ENCODE measurements at regions of chr6 and their contacts with region 1.

Region 1: GRCh38 chr6:167652701-167653095 is 174.0 kb upstream of the AFDN start:
- DNase-seq: peak; percentile 20 to 42 (median 24)
- ATAC-seq: peak; percentile 77
- H3K4me3 ChIP-seq: no peak overlapping the region
- H3K27ac ChIP-seq: no peak overlapping the region
- H3K4me1 ChIP-seq: peaks cover 0 to 12% of the 10 kb centered on the region in 2 experiments; a peak in 3 of 5 replicates
- H3K27me3 ChIP-seq: peaks cover 7 to 26% of the 10 kb centered on the region in 2 experiments; a peak in 4 of 5 replicates
- CTCF ChIP-seq: no peak
- EP300 ChIP-seq: no peak
- POLR2A ChIP-seq: no peak
- RAD21 ChIP-seq: no peak

Region 2: DNA sequence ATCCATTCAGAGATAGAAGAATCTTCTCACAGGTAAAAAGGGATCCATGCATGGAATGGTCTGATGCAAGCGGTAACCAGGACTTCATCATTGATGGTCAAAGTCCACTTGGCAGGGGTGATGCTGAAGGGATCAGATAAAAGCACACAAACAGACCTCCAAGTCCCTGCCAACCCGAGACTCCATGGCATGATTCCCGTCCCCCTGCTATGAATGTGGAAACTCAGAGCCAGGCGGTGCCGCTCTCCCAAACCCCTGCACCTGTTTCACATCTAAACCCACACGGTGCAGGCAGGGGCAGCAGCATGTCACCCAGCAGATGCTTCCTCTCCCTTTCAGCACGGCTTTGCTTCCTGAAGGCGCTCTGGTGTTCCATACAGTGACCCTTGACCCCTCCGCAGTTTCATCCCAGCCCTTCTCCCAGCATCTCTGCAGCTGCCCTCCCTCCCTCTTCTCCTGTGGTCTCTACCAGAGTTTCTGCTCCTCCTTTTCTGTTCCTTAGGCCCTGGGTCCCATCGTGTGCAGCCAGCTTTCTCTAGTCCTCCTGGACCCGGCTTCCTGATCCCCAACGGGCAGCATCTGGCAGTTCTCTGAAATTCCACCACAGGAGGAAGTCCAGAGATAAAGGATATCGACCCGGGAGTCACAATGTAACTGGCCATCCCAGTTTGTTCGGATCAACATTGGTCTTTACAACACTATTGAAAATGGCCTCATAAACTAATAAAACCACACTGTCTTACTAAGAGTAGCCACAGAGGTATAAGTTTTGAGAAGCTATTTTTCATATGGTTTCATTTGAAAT is 92.8 kb before region 1 on chr6:
- CTCF ChIA-PET with region 1: no interaction called
- POLR2A ChIA-PET with region 1: no interaction called
- in situ Hi-C with region 1: loop called (anchors 5 kb)
- intact Hi-C with region 1: no loop called
- DNase-seq: no peak
- ATAC-seq: no peak
- H3K4me3 ChIP-seq: no peak overlapping the region
- H3K27ac ChIP-seq: no peak overlapping the region
- H3K4me1 ChIP-seq: peaks cover 0 to 4% of the 10 kb centered on the region in 2 experiments; a peak in 1 of 5 replicates
- H3K27me3 ChIP-seq: peaks cover 2 to 39% of the 10 kb centered on the region in 2 experiments; a peak in 3 of 5 replicates
- CTCF ChIP-seq: no peak
- EP300 ChIP-seq: no peak
- POLR2A ChIP-seq: no peak
- RAD21 ChIP-seq: no peak

Region 3: GRCh38 chr6:167699141-167699931 is 46.6 kb after region 1 on chr6:
- CTCF ChIA-PET with region 1: no interaction called
- POLR2A ChIA-PET with region 1: no interaction called
- in situ Hi-C with region 1: no loop called
- intact Hi-C with region 1: no loop called
- DNase-seq: no peak
- ATAC-seq: peak; percentile 13; the same call in 1 of the 3 replicates
- H3K4me3 ChIP-seq: no peak overlapping the region
- H3K27ac ChIP-seq: no peak overlapping the region
- H3K4me1 ChIP-seq: peaks cover 0 to 8% of the 10 kb centered on the region in 2 experiments; a peak in 2 of 5 replicates
- H3K27me3 ChIP-seq: peaks cover 48 to 61% of the 10 kb centered on the region in 2 experiments
- CTCF ChIP-seq: no peak
- EP300 ChIP-seq: no peak
- POLR2A ChIP-seq: no peak
- RAD21 ChIP-seq: no peak